AG04450 (cell line): ENCODE measurements at regions of chr9 and their contacts with region 1.

Region 1: GRCh38 chr9:84261082-84261746 is 79.3 kb downstream of the SLC28A3 start:
- DNase-seq: peak; percentile 47
- H3K4me3 ChIP-seq: peak overlapping the region; percentile 43
- H3K27ac ChIP-seq: no peak overlapping the region
- H3K27me3 ChIP-seq: no peaks in the 10 kb centered on the region
- CTCF ChIP-seq: peak; percentile 96

Region 2: GRCh38 chr9:83937911-83938323 is 323.3 kb before region 1 on chr9:
- CTCF ChIA-PET with region 1: interaction called, 66 read pairs
- POLR2A ChIA-PET with region 1: no interaction called
- DNase-seq: no peak
- H3K4me3 ChIP-seq: no peak overlapping the region
- H3K27ac ChIP-seq: no peak overlapping the region
- H3K27me3 ChIP-seq: no peaks in the 10 kb centered on the region
- CTCF ChIP-seq: peak; percentile 69

Region 3: GRCh38 chr9:83972286-83972685 is 288.9 kb before region 1 on chr9:
- CTCF ChIA-PET with region 1: interaction called, 16 read pairs
- POLR2A ChIA-PET with region 1: no interaction called
- DNase-seq: no peak
- H3K4me3 ChIP-seq: no peak overlapping the region
- H3K27ac ChIP-seq: no peak overlapping the region
- H3K27me3 ChIP-seq: no peaks in the 10 kb centered on the region
- CTCF ChIP-seq: no peak

Region 4: DNA sequence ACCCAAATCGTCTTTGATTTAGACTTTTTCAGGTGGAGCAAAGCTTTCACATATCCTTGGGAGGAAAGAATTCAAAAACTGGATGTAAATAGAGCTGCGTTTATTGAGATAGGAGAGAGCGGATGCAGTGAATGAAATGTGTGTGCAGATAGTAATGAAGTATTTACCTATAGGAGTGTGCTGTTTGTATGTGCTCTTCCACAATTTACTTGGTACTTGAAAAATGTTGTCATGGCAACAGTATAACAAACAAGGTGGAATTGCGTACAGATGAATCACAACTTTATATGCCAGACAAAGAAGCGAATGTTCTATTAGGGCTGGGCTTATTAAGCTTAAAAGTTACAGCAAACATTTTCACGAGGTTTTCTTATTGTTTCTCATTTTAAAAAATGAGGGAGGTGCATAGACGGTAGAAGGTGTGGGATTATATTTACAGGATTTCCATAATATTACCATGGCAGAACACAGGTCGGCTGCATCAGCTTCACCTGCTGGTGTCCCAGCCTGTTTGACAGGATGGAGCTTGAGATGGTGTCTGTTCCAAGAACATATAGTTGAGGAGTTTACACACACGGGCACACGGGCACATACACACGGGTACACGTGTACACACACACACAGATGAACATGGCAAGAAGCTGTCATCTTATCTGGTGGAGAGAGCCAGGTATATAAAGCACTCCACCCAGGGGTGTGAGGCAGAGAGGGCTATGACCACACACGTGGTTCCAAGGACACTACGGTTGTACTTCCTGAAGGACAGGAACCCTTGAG is 124.9 kb before region 1 on chr9:
- CTCF ChIA-PET with region 1: interaction called, 10 read pairs
- POLR2A ChIA-PET with region 1: no interaction called
- DNase-seq: no peak
- H3K4me3 ChIP-seq: no peak overlapping the region
- H3K27ac ChIP-seq: no peak overlapping the region
- H3K27me3 ChIP-seq: peaks cover 40% of the 10 kb centered on the region
- CTCF ChIP-seq: no peak

Region 5: GRCh38 chr9:84244850-84245249 is 16.4 kb before region 1 on chr9:
- CTCF ChIA-PET with region 1: interaction called, 19 read pairs
- POLR2A ChIA-PET with region 1: no interaction called
- DNase-seq: no peak
- H3K4me3 ChIP-seq: no peak overlapping the region
- H3K27ac ChIP-seq: no peak overlapping the region
- H3K27me3 ChIP-seq: no peaks in the 10 kb centered on the region
- CTCF ChIP-seq: no peak

Region 6: DNA sequence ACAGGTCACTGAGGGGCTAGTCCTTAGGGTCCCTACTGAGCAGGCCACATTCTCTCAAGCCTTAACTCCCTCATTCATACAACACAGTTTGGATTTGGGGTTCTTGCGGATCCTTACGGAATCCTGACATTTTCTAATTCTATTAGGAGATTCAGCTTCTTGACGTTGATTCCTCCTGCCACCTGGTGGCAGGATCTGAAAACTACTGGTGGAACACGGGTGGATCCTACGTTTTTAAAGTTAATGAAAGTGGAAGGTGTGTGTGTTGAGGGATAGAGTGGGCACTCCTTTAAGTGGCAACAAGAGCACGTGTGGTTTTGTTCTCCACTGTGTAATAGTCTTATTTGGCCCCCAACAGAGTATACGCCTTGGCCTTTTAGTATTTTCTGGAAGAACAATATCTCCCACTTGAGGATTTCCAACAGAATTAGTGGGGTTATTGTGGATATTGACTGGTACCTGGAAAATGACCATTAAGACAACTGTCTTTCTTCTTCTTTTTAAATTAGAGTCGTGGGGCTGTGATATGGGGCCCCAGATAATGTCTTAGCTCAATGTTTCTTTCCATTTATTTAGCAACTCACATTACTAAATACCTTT is 54.2 kb after region 1 on chr9:
- CTCF ChIA-PET with region 1: interaction called, 15 read pairs
- POLR2A ChIA-PET with region 1: no interaction called
- DNase-seq: no peak
- H3K4me3 ChIP-seq: no peak overlapping the region
- H3K27ac ChIP-seq: no peak overlapping the region
- H3K27me3 ChIP-seq: no peaks in the 10 kb centered on the region
- CTCF ChIP-seq: peak; percentile 82

Region 7: DNA sequence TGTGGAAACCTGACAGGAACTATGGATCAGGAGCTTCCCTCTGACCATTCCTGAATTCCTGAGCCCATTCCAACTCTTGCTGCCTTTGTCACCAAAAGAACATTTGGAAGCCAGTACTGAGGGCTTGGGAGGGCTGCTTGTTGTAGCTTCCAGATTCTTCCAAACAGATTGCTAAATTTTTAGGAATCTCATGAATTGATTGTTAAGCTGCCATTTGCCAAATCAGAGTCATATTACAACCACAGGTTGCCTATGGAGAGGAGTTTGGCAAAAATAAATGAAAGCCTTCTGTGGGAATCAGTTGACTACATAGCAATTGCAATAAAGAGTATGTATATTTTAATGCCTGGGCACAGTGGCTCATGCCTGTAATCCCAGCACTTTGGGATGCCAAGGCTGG is 118.5 kb after region 1 on chr9:
- CTCF ChIA-PET with region 1: no interaction called
- POLR2A ChIA-PET with region 1: no interaction called
- DNase-seq: no peak
- H3K4me3 ChIP-seq: no peak overlapping the region
- H3K27ac ChIP-seq: no peak overlapping the region
- H3K27me3 ChIP-seq: no peaks in the 10 kb centered on the region
- CTCF ChIP-seq: no peak

Region 8: DNA sequence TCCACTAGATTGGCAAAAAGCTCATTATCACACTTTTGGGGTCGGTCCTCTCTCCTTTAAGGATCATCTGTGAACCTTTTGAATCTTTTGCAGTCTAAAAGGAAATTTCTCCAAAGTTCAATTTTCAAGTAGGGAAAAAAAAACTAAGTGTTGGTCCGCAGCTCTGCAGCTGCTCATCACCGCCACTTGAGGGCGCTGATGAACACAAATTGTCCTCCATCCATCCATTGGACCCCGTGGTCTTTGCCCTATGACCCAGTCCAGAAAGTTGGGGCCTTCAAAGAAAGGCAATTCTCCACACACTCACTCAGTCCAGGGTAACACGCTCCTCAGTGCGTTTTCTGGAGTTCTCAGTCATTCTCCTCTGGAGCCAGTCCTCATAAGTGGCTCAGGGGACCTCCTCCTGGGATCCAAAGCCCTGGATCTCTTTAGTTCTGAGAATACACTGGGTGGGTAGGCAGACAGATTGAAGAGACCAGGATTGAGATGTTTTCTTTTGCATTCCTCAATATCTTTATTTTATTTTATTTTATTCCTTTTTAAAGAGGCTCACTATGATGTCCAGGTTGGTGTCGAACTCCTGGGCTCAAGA is 143.0 kb after region 1 on chr9:
- CTCF ChIA-PET with region 1: no interaction called
- POLR2A ChIA-PET with region 1: no interaction called
- DNase-seq: no peak
- H3K4me3 ChIP-seq: no peak overlapping the region
- H3K27ac ChIP-seq: no peak overlapping the region
- H3K27me3 ChIP-seq: no peaks in the 10 kb centered on the region
- CTCF ChIP-seq: peak; percentile 29